Left colon (tissue), 2 donors: ENCODE measurements at regions of chr1 and their contacts with region 1.

Region 1: DNA sequence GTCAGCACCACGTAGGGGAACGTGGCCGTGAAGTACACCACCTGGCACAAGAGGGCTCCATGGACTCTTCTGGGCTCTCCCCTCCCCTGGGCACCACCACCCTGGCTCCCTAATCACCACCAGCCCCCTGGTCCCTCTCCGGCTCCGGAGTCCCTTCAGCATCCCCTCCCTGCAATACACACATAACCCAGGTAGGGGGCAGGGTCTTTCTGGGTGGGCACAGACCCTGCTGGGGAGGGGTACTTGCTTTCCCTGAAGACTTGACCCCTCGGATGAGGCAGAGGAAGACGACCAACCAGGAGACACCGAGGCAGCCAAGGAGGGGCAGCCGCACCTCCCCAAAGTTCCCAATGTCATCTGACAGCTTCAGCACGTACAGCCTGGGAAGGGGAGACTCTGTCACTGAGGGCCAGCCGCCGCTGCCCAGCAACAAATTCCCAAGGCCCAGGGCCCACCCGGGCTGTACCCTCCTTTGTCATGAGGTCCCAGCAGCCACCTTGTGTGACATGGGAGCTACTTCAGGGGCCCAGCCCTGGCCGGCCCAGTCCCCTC is 11.3 kb downstream of the CCDC24 start:
- DNase-seq: no peak
- ATAC-seq: no peak

Region 2: GRCh38 chr1:44036409-44037139 is 33.9 kb after region 1 on chr1:
- intact Hi-C with region 1: loop called in 1 of 2 experiments (anchors 5 kb)
- DNase-seq: peak; percentile 58 to 75
- ATAC-seq: peak; percentile 67

Region 3: GRCh38 chr1:44049839-44050238 is 47.2 kb after region 1 on chr1:
- intact Hi-C with region 1: loop called in 1 of 2 experiments (anchors 5 kb)
- DNase-seq: no peak
- ATAC-seq: no peak

Region 4: GRCh38 chr1:44316231-44316759 is 313.6 kb after region 1 on chr1:
- intact Hi-C with region 1: no loop called
- DNase-seq: no peak
- ATAC-seq: no peak